ENCODE measurements at regions of chr17 and their contacts with region 1.

Region 1: DNA sequence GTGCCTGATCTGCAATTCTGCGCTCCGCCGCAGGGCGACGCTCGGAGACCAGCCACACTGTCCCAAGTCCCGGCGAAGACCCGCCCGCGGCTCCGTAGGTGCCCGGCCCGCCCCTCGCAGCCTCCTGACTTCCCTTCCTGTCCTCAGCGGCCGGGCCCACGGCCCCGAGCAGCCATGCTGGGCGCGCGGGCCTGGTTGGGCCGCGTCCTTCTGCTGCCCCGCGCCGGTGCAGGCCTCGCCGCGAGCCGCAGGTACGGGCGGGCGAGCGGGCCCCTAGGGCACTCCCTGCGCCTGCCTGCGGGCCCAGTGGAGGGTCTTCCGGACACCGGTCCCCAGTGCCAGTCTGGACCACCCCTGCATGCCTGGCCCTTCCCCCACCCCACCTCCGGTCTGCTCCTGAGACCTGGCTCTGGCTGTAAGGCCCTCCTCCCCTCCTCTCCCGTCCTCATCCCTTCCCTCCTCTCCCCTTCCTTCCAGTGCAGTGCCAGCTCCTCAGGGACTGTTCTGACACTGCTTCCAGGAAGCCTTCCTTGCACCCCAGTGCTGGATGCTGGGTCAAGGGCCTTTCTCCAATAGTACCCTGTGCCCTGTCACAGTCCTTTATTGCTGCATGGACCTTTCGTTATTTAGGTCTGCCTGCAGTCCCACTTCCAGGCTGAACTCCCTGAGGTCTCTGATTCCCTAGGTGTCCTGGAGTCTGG is at the start of gene SPATA20:
- DNase-seq: peak; percentile 89 to 97 (median 93)
- ATAC-seq: peak; percentile 62 to 82 (median 72)
- H3K4me3 ChIP-seq: peak within 1 kb of the TSS; percentile 31 to 74 (median 58)
- H3K27ac ChIP-seq: peak within 1 kb of the TSS; percentile 38 to 78 (median 52)
- H3K4me1 ChIP-seq: peaks cover 7 to 19% (median 16%) of the 10 kb centered on the region in 3 donors
- H3K27me3 ChIP-seq: no peaks in the 10 kb centered on the region
- CTCF ChIP-seq: peak; percentile 84 to 99 (median 96)
- total RNA-seq, gene SPATA20: 26.9 to 42.3 (median 36.1) TPM

Region 2: GRCh38 chr17:50487213-50488096 is 59.7 kb before region 1 on chr17:
- intact Hi-C with region 1: no loop called
- DNase-seq: no peak
- ATAC-seq: peak in 2 of 4 donors; percentile 30 to 36
- H3K4me3 ChIP-seq: no peak overlapping the region
- H3K27ac ChIP-seq: no peak overlapping the region
- H3K4me1 ChIP-seq: peaks cover 4 to 6% (median 5%) of the 10 kb centered on the region in 3 donors
- H3K27me3 ChIP-seq: no peaks in the 10 kb centered on the region
- CTCF ChIP-seq: no peak

Region 3: GRCh38 chr17:50620858-50621257 is 73.7 kb after region 1 on chr17:
- intact Hi-C with region 1: loop called in 2 of 3 experiments (anchors 5 kb)
- DNase-seq: no peak
- ATAC-seq: no peak
- H3K4me3 ChIP-seq: no peak overlapping the region
- H3K27ac ChIP-seq: no peak overlapping the region
- H3K4me1 ChIP-seq: no peaks in the 10 kb centered on the region
- H3K27me3 ChIP-seq: no peaks in the 10 kb centered on the region
- CTCF ChIP-seq: no peak

Region 4: GRCh38 chr17:50626037-50626574 is 78.9 kb after region 1 on chr17:
- intact Hi-C with region 1: loop called in 2 of 3 experiments (anchors 5 kb)
- DNase-seq: peak; percentile 66 to 91 (median 80)
- ATAC-seq: peak; percentile 60 to 78 (median 68)
- H3K4me3 ChIP-seq: no peak overlapping the region
- H3K27ac ChIP-seq: no peak overlapping the region
- H3K4me1 ChIP-seq: peaks cover 0 to 8% (median 0%) of the 10 kb centered on the region in 3 donors
- H3K27me3 ChIP-seq: no peaks in the 10 kb centered on the region
- CTCF ChIP-seq: peak; percentile 51 to 84 (median 70)

Region 5: DNA sequence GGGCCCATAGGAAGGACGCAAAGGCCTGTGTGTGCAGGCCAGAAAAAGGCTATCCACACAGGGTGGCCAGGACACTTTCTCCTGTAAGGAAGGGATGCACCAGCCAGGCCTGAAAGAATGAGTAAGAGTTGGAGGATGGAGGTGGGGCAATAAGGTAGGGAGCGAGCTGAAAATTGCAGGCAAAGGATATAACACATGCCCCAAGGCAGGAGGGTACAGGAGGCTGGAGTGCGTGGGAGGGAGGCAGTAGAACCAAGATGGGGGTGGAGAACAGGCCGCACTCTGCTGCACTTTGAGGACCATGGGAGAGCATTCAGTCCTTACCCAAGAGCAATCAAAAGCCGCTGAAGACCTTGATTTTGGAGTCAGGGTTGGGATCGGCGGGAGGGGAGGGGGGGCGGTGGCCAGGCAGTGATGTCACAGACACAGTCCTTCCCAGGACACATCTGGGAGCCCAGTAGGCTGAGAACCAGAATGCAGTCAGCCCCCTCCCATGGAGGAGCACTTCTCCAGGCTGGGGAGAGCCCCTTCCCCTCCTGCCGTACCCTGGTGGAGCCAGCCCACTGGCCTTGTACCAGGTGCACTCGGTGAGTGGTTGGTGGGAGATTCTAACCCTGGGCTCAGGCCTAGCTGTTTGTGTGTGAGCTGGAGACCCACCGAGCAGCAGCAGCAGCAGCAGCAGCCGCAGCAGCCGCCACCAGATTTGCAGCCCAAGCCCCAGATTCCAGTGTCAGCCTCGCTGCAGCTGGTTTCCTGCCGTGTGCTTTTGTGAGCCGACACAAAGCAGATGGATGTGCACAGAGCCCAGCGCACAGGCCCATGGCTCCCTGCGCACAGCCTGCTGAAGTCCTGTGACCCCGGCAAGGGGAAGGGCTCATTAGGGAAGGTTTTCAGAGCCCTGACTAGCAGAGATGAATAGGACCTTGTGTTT is 143.0 kb after region 1 on chr17:
- intact Hi-C with region 1: loop called in 2 of 3 experiments (anchors 5 kb)
- DNase-seq: no peak
- ATAC-seq: no peak
- H3K4me3 ChIP-seq: no peak overlapping the region
- H3K27ac ChIP-seq: peak overlapping the region; percentile 22 to 90 (median 56)
- H3K4me1 ChIP-seq: peaks cover 77 to 92% (median 84%) of the 10 kb centered on the region in 3 donors
- H3K27me3 ChIP-seq: no peaks in the 10 kb centered on the region
- CTCF ChIP-seq: no peak

Region 6: DNA sequence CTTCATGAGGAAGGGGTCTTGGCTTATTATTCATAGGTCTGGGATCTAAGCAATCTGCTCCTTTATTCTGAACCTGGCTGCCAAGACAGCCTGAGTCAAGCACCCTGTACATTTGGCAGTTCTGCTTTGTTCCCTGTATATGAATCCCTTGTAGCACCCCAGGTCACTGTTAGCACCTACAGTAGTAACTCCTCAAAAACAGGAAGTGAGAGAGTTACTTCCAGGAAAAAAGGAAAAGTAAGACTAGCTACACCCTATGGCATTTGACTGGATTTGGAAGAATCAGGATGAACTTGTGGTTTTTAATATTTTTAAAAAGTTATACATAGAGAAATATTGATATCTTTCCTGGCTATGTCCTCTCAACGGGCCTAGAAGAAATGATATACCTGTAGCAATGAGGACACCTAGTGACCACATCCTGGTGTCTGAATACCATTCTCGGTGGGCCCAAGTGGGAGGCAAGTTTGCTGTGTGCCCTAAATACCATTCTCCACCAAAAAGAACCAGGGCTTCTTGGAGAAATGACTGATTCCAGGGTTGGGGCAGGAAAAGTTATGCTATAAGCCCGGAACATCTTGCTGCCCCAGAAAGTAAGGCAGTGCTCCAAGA is 150.6 kb after region 1 on chr17:
- intact Hi-C with region 1: loop called in 2 of 3 experiments (anchors 5 kb)
- DNase-seq: no peak
- ATAC-seq: no peak
- H3K4me3 ChIP-seq: no peak overlapping the region
- H3K27ac ChIP-seq: peak overlapping the region in 3 of 4 donors; percentile 30 to 90 (median 70)
- H3K4me1 ChIP-seq: peaks cover 23 to 32% (median 31%) of the 10 kb centered on the region in 3 donors
- H3K27me3 ChIP-seq: no peaks in the 10 kb centered on the region
- CTCF ChIP-seq: no peak

Region 7: GRCh38 chr17:50841949-50842354 is 294.8 kb after region 1 on chr17:
- intact Hi-C with region 1: loop called in 2 of 3 experiments (anchors 5 to 10 kb)
- DNase-seq: peak; percentile 59 to 85 (median 76)
- ATAC-seq: peak; percentile 80 to 94 (median 91)
- H3K4me3 ChIP-seq: no peak overlapping the region
- H3K27ac ChIP-seq: no peak overlapping the region
- H3K4me1 ChIP-seq: no peaks in the 10 kb centered on the region
- H3K27me3 ChIP-seq: no peaks in the 10 kb centered on the region
- CTCF ChIP-seq: peak; percentile 54 to 73 (median 64)

Region 8: GRCh38 chr17:50865984-50866774 is 319.0 kb after region 1 on chr17 and contains the start of gene TOB1:
- intact Hi-C with region 1: no loop called
- DNase-seq: peak; percentile 98 to 100 (median 99)
- ATAC-seq: peak; percentile 72 to 81 (median 76)
- H3K4me3 ChIP-seq: peak within 1 kb of the TSS; percentile 87 to 99 (median 96)
- H3K27ac ChIP-seq: peak within 1 kb of the TSS; percentile 99 to 100 (median 100)
- H3K4me1 ChIP-seq: peaks cover 14 to 32% (median 15%) of the 10 kb centered on the region in 3 donors
- H3K27me3 ChIP-seq: no peaks in the 10 kb centered on the region
- CTCF ChIP-seq: no peak
- total RNA-seq, gene TOB1: 65.9 to 157 (median 99.0) TPM